Activated naive CD4-positive, alpha-beta T cell treated with anti-CD3 and anti-CD28 coated beads for 36 hours (primary cell): ENCODE measurements at regions of chr3 and their contacts with region 1.

Region 1: DNA sequence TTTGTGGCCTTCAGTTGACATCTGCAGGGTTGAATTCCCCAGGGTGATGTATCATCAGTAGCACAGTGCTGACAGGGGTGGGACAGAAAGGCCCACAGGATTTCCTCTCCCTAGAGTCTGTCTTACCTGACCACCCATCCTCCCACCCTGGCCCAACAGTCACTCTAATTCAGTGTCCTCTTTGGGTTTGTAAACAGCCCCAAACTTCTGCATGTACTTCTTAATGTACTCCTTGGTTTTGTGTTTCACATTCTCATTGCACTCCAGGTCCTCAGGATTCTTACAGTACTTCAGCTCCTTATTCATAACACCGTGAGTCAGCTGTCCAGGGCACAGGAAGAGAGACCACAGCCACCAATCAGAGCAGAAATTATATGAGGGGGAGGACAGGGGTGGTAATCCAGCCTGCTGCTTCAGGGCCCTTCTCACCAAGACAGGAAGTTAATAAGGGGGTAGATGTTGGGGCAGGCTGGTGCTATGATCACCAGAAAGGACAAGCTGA is 37.5 kb downstream of the NBEAL2 start:
- DNase-seq: peak; percentile 61
- H3K4me3 Mint-ChIP-seq: peak overlapping the region; percentile 2
- H3K27ac Mint-ChIP-seq: peak overlapping the region; percentile 70
- H3K4me1 Mint-ChIP-seq: peaks cover 40% of the 10 kb centered on the region
- H3K27me3 Mint-ChIP-seq: no peaks in the 10 kb centered on the region

Region 2: GRCh38 chr3:46987743-46988401 is 29.1 kb before region 1 on chr3:
- CTCF ChIA-PET with region 1: no interaction called
- intact Hi-C with region 1: loop called (anchors 2 kb)
- DNase-seq: peak; percentile 94
- H3K4me3 Mint-ChIP-seq: peak overlapping the region; percentile 82
- H3K27ac Mint-ChIP-seq: peak overlapping the region; percentile 89
- H3K4me1 Mint-ChIP-seq: peaks cover 50% of the 10 kb centered on the region
- H3K27me3 Mint-ChIP-seq: no peaks in the 10 kb centered on the region

Region 3: DNA sequence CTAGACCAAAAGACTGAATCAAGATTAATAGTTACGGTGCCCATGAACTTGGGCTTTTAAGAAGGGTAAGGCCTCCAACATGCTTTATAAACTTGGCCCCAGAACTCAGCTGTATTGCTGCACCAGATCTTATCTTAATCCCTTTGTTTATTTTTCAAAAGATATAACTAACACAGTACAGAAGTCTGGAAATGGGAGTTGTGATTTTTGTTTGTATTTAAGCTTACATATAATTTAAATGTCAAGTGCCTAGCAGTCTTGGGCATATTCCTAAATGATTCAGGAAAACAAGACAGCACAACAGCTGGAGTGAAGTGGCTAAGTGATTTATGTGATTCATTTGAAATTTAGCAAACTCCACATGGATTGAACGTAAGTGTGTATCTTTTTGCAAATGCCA is 18.6 kb after region 1 on chr3:
- CTCF ChIA-PET with region 1: no interaction called
- intact Hi-C with region 1: loop called (anchors 1 kb)
- DNase-seq: no peak
- H3K4me3 Mint-ChIP-seq: no peak overlapping the region
- H3K27ac Mint-ChIP-seq: no peak overlapping the region
- H3K4me1 Mint-ChIP-seq: peaks cover 40% of the 10 kb centered on the region
- H3K27me3 Mint-ChIP-seq: no peaks in the 10 kb centered on the region

Region 4: DNA sequence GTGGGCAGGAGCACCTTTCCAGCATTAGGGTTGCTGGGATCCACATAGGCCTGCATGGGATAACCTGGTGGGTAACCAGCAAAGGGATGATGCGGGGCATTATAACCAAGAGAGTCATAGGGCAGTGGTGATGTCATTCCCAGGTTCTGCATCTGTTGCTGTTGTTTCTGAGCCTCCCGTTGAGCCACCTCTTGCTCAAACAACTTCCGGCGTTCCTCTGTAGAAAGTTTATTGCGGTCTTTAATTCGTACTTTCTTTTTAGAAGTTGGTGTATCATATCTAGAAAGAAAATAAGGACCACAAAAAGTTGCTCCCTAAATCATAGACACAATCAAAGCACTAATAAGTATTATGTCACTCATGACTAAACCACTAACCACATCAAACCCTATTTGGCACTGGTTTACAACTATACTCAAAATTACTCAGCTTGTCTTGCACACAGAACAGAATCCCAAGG is 40.3 kb after region 1 on chr3:
- CTCF ChIA-PET with region 1: no interaction called
- intact Hi-C with region 1: loop called (anchors 1 kb)
- DNase-seq: peak; percentile 72
- H3K4me3 Mint-ChIP-seq: no peak overlapping the region
- H3K27ac Mint-ChIP-seq: no peak overlapping the region
- H3K4me1 Mint-ChIP-seq: peaks cover 45% of the 10 kb centered on the region
- H3K27me3 Mint-ChIP-seq: no peaks in the 10 kb centered on the region

Region 5: DNA sequence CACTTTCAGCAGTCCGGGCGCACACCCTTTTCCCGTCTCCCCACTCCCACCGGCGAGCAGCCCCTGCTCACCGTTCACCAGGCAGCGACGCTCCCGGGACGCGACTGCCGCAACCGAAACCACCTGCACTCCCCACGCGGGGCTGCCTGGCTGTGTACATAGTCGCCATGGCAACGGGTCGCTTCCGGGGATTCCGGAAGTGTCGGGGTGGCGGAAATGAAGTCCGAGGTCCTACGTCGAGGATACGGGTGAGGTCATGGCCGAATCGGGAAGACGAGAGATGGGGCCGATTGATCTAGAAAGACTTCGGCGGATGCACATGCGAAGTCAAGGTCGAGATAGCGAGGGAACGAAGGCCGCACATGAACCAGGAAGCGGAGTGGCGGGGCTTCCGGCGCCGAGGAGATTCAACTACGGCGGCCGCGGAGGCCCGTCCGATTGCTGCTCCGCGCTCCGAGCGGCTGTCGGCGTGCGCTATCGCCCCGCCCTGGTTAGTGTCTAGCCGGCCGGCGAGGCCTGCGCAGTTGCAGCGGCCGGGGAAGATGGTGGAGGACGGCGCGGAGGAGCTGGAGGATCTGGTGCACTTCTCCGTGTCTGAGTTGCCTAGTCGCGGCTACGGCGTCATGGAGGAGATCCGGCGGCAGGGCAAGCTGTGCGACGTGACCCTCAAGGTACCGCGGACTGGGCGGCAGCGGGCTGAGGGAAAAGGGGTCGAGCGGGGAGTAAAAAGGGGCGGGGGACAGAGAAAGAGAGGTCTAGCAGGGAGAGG is 265.6 kb after region 1 on chr3 and contains the starts of genes KIF9 and KLHL18:
- CTCF ChIA-PET with region 1: no interaction called
- intact Hi-C with region 1: loop called (anchors 5 kb)
- DNase-seq: peak; percentile 95
- H3K4me3 Mint-ChIP-seq: peak within 1 kb of the TSS; percentile 99
- H3K27ac Mint-ChIP-seq: peak within 1 kb of the TSS; percentile 99
- H3K4me1 Mint-ChIP-seq: peaks cover 42% of the 10 kb centered on the region
- H3K27me3 Mint-ChIP-seq: no peaks in the 10 kb centered on the region
- total RNA-seq, gene KIF9: 4.5 to 4.9 TPM
- total RNA-seq, gene KLHL18: 20.7 to 21.6 TPM

Region 6: DNA sequence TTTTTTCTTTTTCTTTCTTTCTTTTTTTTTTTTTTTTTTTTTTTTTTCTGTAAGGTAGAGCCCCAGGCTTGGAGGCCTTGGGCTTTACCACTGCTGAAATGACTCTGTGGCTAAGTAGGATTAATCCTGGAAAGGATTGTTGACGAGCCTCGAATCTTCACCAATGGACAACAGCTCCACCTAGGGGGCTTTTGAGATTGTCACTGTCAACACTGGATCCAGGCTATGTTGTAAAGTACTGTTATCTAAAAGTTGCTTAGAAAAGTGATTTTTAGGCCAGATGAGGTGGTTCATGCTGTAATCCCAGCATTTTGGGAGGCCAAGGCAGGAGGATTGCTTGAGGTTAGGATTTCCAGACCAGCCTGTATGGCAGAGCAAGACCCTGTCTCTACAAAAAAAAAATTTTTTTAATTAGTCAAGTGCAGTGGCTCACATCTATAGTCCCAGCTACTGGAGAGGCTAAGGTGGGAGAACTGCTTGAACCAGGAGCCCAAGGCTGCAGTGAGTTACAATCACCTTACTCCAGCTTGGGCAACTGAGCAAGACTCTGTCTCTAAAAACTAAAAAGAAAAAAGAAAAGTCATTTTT is 307.4 kb after region 1 on chr3:
- CTCF ChIA-PET with region 1: interaction called, 3 read pairs
- intact Hi-C with region 1: loop called (anchors 5 kb)
- DNase-seq: peak; percentile 66
- H3K4me3 Mint-ChIP-seq: no peak overlapping the region
- H3K27ac Mint-ChIP-seq: no peak overlapping the region
- H3K4me1 Mint-ChIP-seq: no peaks in the 10 kb centered on the region
- H3K27me3 Mint-ChIP-seq: no peaks in the 10 kb centered on the region

Region 7: GRCh38 chr3:47380601-47381316 is 363.8 kb after region 1 on chr3 and contains the start of gene PTPN23:
- CTCF ChIA-PET with region 1: no interaction called
- intact Hi-C with region 1: loop called (anchors 5 kb)
- DNase-seq: peak; percentile 99
- H3K4me3 Mint-ChIP-seq: peak within 1 kb of the TSS; percentile 100
- H3K27ac Mint-ChIP-seq: peak within 1 kb of the TSS; percentile 98
- H3K4me1 Mint-ChIP-seq: peaks cover 37% of the 10 kb centered on the region
- H3K27me3 Mint-ChIP-seq: no peaks in the 10 kb centered on the region
- total RNA-seq, gene PTPN23: 18.7 to 21.6 TPM